ENCODE measurements at regions of chr2 and their contacts with region 1.

Region 1: GRCh38 chr2:97995734-97996624 is at the start of gene TMEM131:
- DNase-seq: peak; percentile 95 to 97
- H3K4me3 ChIP-seq: peak within 1 kb of the TSS; percentile 98
- H3K4me3 Mint-ChIP-seq: peak within 1 kb of the TSS; percentile 92
- H3K27ac Mint-ChIP-seq: peak within 1 kb of the TSS; percentile 75
- H3K4me1 ChIP-seq: peaks cover 20% of the 10 kb centered on the region
- H3K4me1 Mint-ChIP-seq: peaks cover 14% of the 10 kb centered on the region
- H3K27me3 ChIP-seq: no peaks in the 10 kb centered on the region
- H3K27me3 Mint-ChIP-seq: peaks cover 3% of the 10 kb centered on the region
- CTCF ChIP-seq: no peak
- total RNA-seq, gene TMEM131: 35.8 and 36.3 TPM in 2 replicates

Region 2: DNA sequence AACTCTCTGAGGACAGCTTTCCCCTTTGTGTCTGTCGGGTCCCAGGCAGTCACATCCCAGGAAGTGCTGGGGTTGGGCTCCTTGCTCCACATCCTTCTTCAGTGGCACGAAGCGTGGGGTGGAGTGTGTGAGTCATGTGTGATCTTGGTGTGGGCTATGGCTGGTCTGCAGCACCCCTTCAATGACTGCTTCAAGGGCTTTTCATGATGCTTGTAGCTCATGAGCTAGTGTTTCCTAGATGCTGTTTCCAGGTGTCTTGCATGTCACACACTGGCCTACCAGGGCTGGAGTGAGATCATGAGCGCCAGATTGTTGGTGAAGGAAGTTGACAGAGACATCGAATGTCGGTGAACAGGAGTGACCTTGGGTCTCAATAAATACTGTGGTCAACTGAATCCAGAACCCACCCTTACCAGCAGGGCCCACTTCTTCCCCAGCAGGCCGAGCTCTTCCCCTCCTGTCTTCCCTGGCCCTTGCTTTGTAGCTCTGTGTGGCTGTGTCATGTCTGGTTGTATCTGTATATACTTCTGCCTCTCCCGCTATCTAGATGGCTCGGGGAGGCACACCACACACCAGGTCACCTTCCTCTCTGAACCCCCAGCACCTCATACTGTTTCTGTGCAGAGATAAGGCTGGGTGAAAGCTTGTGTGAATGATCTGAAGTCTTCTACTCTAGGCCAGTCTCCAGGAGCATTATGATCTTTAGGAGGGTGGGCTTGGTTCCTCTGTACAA is 322.6 kb before region 1 on chr2:
- CTCF ChIA-PET with region 1: no interaction called
- POLR2A ChIA-PET with region 1: no interaction called
- intact Hi-C with region 1: no loop called
- DNase-seq: no peak
- H3K4me3 ChIP-seq: no peak overlapping the region
- H3K4me3 Mint-ChIP-seq: no peak overlapping the region
- H3K27ac Mint-ChIP-seq: no peak overlapping the region
- H3K4me1 ChIP-seq: peaks cover 6% of the 10 kb centered on the region
- H3K4me1 Mint-ChIP-seq: no peaks in the 10 kb centered on the region
- H3K27me3 ChIP-seq: no peaks in the 10 kb centered on the region
- H3K27me3 Mint-ChIP-seq: no peaks in the 10 kb centered on the region
- CTCF ChIP-seq: no peak

Region 3: DNA sequence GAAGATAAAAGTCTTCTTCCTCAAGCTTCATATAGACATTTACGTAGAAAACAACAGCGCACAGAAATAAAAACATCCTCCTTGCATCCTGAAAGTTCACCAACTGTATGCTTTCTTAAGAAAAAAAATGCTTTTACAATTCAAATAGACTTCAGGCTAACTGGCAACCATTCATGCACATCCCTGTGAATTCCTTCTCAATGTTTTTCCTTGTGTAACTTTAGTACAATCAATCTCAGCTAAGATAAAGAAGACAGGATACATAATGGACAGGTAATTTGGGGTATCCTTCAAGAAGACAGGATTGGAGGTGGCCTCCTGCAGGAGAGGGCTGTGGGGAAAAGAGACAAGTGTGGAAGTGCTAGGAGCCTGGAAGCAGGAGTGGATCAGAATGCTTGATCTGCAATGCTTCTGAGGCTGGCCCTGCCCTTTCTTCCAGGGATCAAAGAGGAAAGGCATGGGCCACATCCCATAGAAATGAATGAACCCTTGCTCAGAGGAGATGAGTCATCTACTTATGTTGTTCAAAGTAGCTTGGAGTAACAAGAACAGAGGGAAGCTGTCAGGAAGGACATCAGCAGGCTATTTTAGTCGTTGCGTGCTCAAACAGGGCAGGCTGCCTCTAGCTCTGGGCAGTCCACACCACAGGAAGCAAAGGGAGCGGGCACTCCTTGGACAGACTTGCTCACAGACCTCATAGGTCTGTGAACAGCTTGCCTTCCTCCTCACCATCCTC is 126.8 kb before region 1 on chr2:
- CTCF ChIA-PET with region 1: no interaction called
- POLR2A ChIA-PET with region 1: no interaction called
- intact Hi-C with region 1: loop called (anchors 10 kb)
- DNase-seq: peak; percentile 31 to 53
- H3K4me3 ChIP-seq: no peak overlapping the region
- H3K4me3 Mint-ChIP-seq: no peak overlapping the region
- H3K27ac Mint-ChIP-seq: no peak overlapping the region
- H3K4me1 ChIP-seq: peaks cover 19% of the 10 kb centered on the region
- H3K4me1 Mint-ChIP-seq: peaks cover 22% of the 10 kb centered on the region
- H3K27me3 ChIP-seq: no peaks in the 10 kb centered on the region
- H3K27me3 Mint-ChIP-seq: no peaks in the 10 kb centered on the region
- CTCF ChIP-seq: no peak

Region 4: GRCh38 chr2:97966518-97967215 is 29.3 kb before region 1 on chr2:
- CTCF ChIA-PET with region 1: no interaction called
- POLR2A ChIA-PET with region 1: no interaction called
- intact Hi-C with region 1: loop called (anchors 2 kb)
- DNase-seq: no peak
- H3K4me3 ChIP-seq: no peak overlapping the region
- H3K4me3 Mint-ChIP-seq: no peak overlapping the region
- H3K27ac Mint-ChIP-seq: no peak overlapping the region
- H3K4me1 ChIP-seq: peaks cover 11% of the 10 kb centered on the region; the same call in 1 of the 2 replicates
- H3K4me1 Mint-ChIP-seq: peaks cover 37% of the 10 kb centered on the region
- H3K27me3 ChIP-seq: no peaks in the 10 kb centered on the region
- H3K27me3 Mint-ChIP-seq: no peaks in the 10 kb centered on the region
- CTCF ChIP-seq: no peak

Region 5: DNA sequence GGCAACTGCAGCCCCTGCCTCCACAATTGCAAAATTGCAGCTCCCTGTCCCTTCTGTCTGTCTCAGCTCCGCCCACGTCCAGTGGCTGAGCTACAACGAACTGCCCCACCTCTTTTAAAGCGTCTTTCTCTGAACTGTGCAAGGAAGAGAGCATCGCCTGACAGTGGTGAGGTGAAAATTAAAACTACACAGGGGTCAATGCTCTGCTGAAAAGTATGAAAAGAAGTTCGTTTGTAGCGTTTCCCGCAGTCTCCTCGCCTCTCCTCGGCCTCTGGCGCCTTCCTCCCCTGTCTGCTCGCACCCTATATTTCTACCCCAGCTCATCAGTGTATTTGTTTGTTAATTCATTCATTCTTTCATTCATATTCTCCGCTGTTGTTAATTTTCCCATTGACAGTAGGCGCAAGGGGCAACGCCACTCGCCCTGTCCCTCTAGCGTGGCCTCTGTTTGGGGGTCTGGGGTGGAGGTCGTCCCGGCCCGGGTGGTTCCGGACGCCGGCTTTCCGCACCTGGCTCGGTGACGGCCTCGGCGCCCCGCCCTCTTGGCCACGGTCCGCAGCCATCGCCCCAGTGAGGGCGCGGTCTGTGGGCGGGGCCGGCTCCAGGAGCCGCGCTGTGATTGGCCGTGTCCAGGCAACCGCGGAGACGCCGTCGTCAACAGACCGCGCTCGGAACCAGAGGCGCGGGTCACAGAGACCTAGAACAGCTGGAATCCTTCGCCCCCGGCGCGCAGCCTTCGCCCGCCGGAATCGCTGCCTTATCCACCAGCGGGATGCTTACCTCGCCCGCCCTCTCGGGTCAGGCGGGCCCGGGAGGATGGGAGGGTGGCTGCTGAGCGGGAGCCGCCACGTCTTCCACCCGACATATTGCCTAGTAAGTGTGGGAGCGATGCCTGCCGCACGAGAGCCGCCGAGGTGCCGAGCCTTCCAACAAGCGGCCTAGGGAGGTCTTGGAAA is 90.8 kb after region 1 on chr2 and contains the start of gene VWA3B:
- CTCF ChIA-PET with region 1: no interaction called
- POLR2A ChIA-PET with region 1: no interaction called
- intact Hi-C with region 1: loop called (anchors 10 kb)
- DNase-seq: peak; percentile 80 to 94
- H3K4me3 ChIP-seq: peak within 1 kb of the TSS; percentile 46
- H3K4me3 Mint-ChIP-seq: peak within 1 kb of the TSS; percentile 87
- H3K27ac Mint-ChIP-seq: peak within 1 kb of the TSS; percentile 9
- H3K4me1 ChIP-seq: peaks cover 21% of the 10 kb centered on the region
- H3K4me1 Mint-ChIP-seq: peaks cover 22% of the 10 kb centered on the region
- H3K27me3 ChIP-seq: no peaks in the 10 kb centered on the region
- H3K27me3 Mint-ChIP-seq: peaks cover 7% of the 10 kb centered on the region
- CTCF ChIP-seq: no peak
- total RNA-seq, gene VWA3B: not detected in 2 replicates

Measured in Caco-2 (cell line).